ENCODE measurements at regions of chr10 and their contacts with region 1.

Region 1: DNA sequence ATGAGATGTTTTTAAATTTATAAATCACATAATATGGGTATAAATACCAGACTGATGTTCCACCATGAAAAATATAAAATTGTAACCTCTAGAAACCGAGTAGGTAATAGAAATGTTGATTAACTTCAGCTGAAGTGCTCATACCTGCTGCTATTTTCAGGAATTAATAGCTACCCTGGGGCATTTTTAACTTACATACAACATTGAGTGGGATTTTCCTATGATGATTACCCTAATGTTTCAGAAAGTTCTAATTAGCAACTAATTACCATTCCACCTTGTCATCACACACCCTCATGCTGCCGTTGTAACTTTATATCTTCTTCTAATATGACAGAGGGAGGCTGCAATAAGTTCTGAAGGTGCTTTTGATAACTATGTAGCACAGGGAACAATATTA is 53.5 kb upstream of the ARHGAP12 start:
- DNase-seq: no peak
- ATAC-seq: no peak
- H3K4me3 ChIP-seq: no peak overlapping the region
- H3K27ac ChIP-seq: no peak overlapping the region
- H3K4me1 ChIP-seq: peaks cover 2% of the 10 kb centered on the region; the same call in 1 of the 2 replicates
- H3K27me3 ChIP-seq: no peaks in the 10 kb centered on the region
- CTCF ChIP-seq: no peak
- POLR2A ChIP-seq: no peak
- RAD21 ChIP-seq: no peak

Region 2: GRCh38 chr10:31728698-31729224 is 253.3 kb before region 1 on chr10:
- CTCF ChIA-PET with region 1: no interaction called
- POLR2A ChIA-PET with region 1: no interaction called
- dilution Hi-C with region 1: no loop called
- in situ Hi-C with region 1: no loop called
- intact Hi-C with region 1: no loop called
- DNase-seq: no peak
- ATAC-seq: no peak
- H3K4me3 ChIP-seq: no peak overlapping the region
- H3K27ac ChIP-seq: no peak overlapping the region
- H3K4me1 ChIP-seq: no peaks in the 10 kb centered on the region
- H3K27me3 ChIP-seq: peaks cover 5% of the 10 kb centered on the region
- CTCF ChIP-seq: no peak
- POLR2A ChIP-seq: no peak
- RAD21 ChIP-seq: no peak

Region 3: DNA sequence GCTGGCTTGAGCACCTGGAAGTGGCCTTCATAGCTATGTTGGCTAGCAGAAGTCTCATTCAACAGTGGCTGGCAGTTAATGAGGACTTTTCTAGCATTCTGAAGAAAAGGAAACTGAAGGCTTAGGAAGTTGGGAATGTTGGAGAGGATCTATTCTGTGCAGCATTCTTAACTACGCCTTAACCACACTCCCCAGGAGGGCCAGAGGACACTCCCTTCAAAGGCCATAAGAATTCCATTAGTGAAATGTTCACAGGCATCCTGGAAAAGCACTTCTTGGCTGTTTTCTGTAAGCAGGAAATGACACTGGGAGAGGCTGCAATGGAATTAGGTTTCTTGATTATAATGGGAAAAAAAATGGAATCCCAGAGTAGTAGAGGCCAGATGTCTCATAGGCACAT is 242.4 kb before region 1 on chr10:
- CTCF ChIA-PET with region 1: no interaction called
- POLR2A ChIA-PET with region 1: no interaction called
- dilution Hi-C with region 1: no loop called
- in situ Hi-C with region 1: no loop called
- intact Hi-C with region 1: no loop called
- DNase-seq: peak; percentile 52
- ATAC-seq: peak; percentile 32
- H3K4me3 ChIP-seq: no peak overlapping the region
- H3K27ac ChIP-seq: no peak overlapping the region
- H3K4me1 ChIP-seq: peaks cover 2% of the 10 kb centered on the region; the same call in 1 of the 2 replicates
- H3K27me3 ChIP-seq: no peaks in the 10 kb centered on the region
- CTCF ChIP-seq: no peak
- POLR2A ChIP-seq: no peak
- RAD21 ChIP-seq: no peak

Region 4: GRCh38 chr10:31952066-31952465 is 30.0 kb before region 1 on chr10:
- CTCF ChIA-PET with region 1: interaction called, 3 read pairs
- POLR2A ChIA-PET with region 1: no interaction called
- dilution Hi-C with region 1: no loop called
- in situ Hi-C with region 1: no loop called
- intact Hi-C with region 1: loop called (anchors 5 kb)
- DNase-seq: no peak
- ATAC-seq: no peak
- H3K4me3 ChIP-seq: no peak overlapping the region
- H3K27ac ChIP-seq: no peak overlapping the region
- H3K4me1 ChIP-seq: peaks cover 2% of the 10 kb centered on the region; the same call in 1 of the 2 replicates
- H3K27me3 ChIP-seq: no peaks in the 10 kb centered on the region
- CTCF ChIP-seq: no peak
- POLR2A ChIP-seq: no peak
- RAD21 ChIP-seq: no peak

Region 5: DNA sequence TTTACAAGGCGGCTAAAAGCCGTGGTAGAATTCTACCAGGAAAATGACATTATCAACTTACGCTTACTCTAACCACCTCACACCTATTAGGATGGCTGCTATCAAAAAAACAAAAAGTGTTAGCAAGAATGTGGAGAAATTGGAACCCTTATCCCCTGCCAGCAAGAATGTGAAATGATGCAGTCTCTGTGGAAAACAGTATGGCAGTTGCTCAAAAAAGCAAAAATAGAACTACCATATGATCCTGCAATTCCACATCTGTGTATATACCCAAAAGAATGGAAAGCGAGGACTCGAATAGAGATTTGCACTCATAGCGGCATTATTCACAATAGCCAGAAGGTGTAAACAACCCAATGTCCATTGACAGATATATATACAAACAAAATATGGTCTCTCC is 12.8 kb after region 1 on chr10:
- CTCF ChIA-PET with region 1: no interaction called
- POLR2A ChIA-PET with region 1: no interaction called
- dilution Hi-C with region 1: no loop called
- in situ Hi-C with region 1: no loop called
- intact Hi-C with region 1: loop called (anchors 1 kb)
- DNase-seq: no peak
- ATAC-seq: no peak
- H3K4me3 ChIP-seq: no peak overlapping the region
- H3K27ac ChIP-seq: no peak overlapping the region
- H3K4me1 ChIP-seq: peaks cover 3% of the 10 kb centered on the region; the same call in 1 of the 2 replicates
- H3K27me3 ChIP-seq: no peaks in the 10 kb centered on the region
- CTCF ChIP-seq: no peak
- POLR2A ChIP-seq: no peak
- RAD21 ChIP-seq: no peak

Measured in IMR-90 (cell line).